B cell (primary cell): ENCODE measurements at regions of chr11 and their contacts with region 1.

Region 1: DNA sequence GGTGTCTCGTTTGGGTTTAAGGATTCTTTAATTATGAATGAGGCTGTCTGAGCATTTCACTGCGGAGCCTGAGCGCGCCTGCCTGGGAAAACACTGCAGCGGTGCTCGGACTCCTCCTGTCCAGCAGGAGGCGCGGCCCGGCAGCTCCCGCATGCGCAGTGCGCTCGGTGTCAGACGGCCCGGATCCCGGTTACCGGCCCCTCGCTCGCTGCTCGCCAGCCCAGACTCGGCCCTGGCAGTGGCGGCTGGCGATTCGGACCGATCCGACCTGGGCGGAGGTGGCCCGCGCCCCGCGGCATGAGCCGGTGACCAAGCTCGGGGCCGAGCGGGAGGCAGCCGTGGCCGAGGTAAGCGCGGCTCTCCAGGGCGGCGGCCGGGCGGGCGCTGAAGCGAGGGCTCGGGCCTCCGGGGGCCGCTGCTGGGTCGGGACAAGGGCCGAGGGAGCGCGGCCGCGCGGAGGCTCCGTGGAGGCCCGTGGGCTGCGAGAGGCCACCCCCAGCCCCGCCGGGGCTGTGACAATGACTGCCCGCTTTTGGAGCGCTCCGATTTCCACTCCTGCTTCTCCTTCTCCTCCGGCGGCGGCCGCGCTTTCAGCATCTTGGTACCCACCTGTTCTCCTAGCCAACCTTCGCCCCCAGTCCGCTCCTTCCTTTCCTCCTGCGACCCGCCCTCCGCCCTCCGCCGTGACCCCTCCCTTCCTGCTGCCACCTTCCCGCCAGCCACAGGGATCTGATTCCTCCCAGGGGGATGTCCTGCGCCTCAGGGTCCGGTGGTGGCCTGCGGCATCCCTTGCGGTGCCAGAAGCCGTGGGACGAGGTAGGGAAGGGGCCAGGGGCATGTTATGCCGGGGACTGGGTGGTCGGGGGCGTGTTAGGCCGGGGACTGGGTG is at the start of gene EXT2:
- DNase-seq: peak; percentile 91
- ATAC-seq: peak; percentile 94
- H3K4me3 ChIP-seq: peak within 1 kb of the TSS in 4 of 5 experiments; percentile 54 to 84 (median 72)
- H3K4me3 Mint-ChIP-seq: peak within 1 kb of the TSS; percentile 90
- H3K27ac ChIP-seq: peak within 1 kb of the TSS in 1 of 2 donors; percentile 76
- H3K27ac Mint-ChIP-seq: peak within 1 kb of the TSS; percentile 69
- H3K4me1 ChIP-seq: peaks cover 15 to 18% of the 10 kb centered on the region in 2 donors
- H3K4me1 Mint-ChIP-seq: peaks cover 30% of the 10 kb centered on the region
- H3K27me3 ChIP-seq: no peaks in the 10 kb centered on the region
- H3K27me3 Mint-ChIP-seq: no peaks in the 10 kb centered on the region
- CTCF ChIP-seq: peak; percentile 95
- total RNA-seq, gene EXT2: 27.7 and 27.8 TPM in 2 replicates

Region 2: DNA sequence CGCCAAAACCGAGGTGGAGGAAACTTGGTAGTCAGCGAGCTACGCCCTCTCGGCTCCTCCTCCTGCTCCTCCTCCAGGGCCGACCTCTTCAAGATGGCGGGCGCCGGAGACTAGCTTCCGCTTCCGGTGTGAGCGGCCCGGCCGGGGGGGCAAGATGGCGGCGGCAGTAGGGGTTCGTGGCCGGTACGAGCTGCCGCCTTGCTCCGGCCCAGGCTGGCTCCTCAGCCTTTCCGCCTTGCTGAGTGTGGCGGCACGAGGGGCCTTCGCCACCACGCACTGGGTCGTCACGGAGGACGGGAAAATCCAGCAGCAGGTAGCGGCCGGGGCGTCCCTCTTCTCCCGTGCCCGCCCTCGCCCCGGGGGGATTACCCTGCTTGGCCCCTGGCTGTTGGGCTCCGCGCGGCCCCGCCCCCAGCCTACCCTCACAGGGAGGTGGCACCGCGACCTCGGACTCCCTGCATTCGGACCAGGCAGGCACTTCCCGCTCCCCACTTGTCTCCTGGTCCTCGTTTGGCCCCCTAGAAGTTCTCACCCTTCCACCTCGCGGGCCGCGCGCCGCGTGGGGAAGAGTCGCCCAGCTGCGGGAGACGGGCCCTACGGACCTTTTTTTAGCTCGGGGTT is 736.8 kb before region 1 on chr11 and contains the start of gene TTC17:
- CTCF ChIA-PET with region 1: no interaction called
- POLR2A ChIA-PET with region 1: no interaction called
- intact Hi-C with region 1: loop called (anchors 2 kb)
- DNase-seq: peak; percentile 93
- ATAC-seq: peak; percentile 93
- H3K4me3 ChIP-seq: peak within 1 kb of the TSS; percentile 75 to 96 (median 91)
- H3K4me3 Mint-ChIP-seq: peak within 1 kb of the TSS; percentile 91
- H3K27ac ChIP-seq: peak within 1 kb of the TSS; percentile 89 to 96
- H3K27ac Mint-ChIP-seq: peak within 1 kb of the TSS; percentile 97
- H3K4me1 ChIP-seq: peaks cover 22 to 25% of the 10 kb centered on the region in 2 donors
- H3K4me1 Mint-ChIP-seq: peaks cover 51% of the 10 kb centered on the region
- H3K27me3 ChIP-seq: no peaks in the 10 kb centered on the region
- H3K27me3 Mint-ChIP-seq: no peaks in the 10 kb centered on the region
- CTCF ChIP-seq: no peak
- total RNA-seq, gene TTC17: 176 and 182 TPM in 2 replicates

Region 3: GRCh38 chr11:44071157-44071556 is 24.6 kb before region 1 on chr11:
- CTCF ChIA-PET with region 1: interaction called, 34 read pairs
- POLR2A ChIA-PET with region 1: interaction called, 3 read pairs
- intact Hi-C with region 1: loop called (anchors 1 kb)
- DNase-seq: no peak
- ATAC-seq: no peak
- H3K4me3 ChIP-seq: no peak overlapping the region
- H3K4me3 Mint-ChIP-seq: no peak overlapping the region
- H3K27ac ChIP-seq: no peak overlapping the region
- H3K27ac Mint-ChIP-seq: no peak overlapping the region
- H3K4me1 ChIP-seq: peaks cover 0 to 9% of the 10 kb centered on the region in 2 donors
- H3K4me1 Mint-ChIP-seq: peaks cover 11% of the 10 kb centered on the region
- H3K27me3 ChIP-seq: no peaks in the 10 kb centered on the region
- H3K27me3 Mint-ChIP-seq: no peaks in the 10 kb centered on the region
- CTCF ChIP-seq: no peak

Region 4: DNA sequence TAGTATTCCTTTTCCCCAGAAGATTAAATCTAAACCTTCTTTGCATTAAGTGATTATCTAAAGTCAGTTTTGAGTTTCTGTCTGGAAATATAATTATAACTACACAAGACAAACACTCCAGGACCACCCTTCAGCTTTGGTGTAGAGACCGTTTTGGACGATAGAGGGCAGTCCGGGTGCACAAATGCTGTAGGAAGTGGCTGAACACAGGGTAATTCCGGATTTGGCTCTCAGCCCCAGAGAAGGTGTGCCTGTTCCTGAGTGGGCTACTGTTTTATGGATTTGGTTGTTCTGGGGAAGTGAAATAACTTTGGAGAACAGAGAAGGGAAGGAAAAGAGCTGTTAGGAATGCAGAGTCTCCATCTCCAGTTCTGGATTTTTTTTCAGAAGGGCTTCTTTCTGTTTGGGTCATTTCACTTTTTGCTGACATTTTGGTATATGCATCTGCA is 14.5 kb after region 1 on chr11:
- CTCF ChIA-PET with region 1: interaction called, 61 read pairs
- POLR2A ChIA-PET with region 1: no interaction called
- intact Hi-C with region 1: loop called (anchors 1 kb)
- DNase-seq: peak; percentile 66
- ATAC-seq: peak; percentile 88
- H3K4me3 ChIP-seq: no peak overlapping the region
- H3K4me3 Mint-ChIP-seq: no peak overlapping the region
- H3K27ac ChIP-seq: no peak overlapping the region
- H3K27ac Mint-ChIP-seq: no peak overlapping the region
- H3K4me1 ChIP-seq: peaks cover 3 to 4% of the 10 kb centered on the region in 2 donors
- H3K4me1 Mint-ChIP-seq: peaks cover 5% of the 10 kb centered on the region
- H3K27me3 ChIP-seq: no peaks in the 10 kb centered on the region
- H3K27me3 Mint-ChIP-seq: no peaks in the 10 kb centered on the region
- CTCF ChIP-seq: peak; percentile 85

Region 5: DNA sequence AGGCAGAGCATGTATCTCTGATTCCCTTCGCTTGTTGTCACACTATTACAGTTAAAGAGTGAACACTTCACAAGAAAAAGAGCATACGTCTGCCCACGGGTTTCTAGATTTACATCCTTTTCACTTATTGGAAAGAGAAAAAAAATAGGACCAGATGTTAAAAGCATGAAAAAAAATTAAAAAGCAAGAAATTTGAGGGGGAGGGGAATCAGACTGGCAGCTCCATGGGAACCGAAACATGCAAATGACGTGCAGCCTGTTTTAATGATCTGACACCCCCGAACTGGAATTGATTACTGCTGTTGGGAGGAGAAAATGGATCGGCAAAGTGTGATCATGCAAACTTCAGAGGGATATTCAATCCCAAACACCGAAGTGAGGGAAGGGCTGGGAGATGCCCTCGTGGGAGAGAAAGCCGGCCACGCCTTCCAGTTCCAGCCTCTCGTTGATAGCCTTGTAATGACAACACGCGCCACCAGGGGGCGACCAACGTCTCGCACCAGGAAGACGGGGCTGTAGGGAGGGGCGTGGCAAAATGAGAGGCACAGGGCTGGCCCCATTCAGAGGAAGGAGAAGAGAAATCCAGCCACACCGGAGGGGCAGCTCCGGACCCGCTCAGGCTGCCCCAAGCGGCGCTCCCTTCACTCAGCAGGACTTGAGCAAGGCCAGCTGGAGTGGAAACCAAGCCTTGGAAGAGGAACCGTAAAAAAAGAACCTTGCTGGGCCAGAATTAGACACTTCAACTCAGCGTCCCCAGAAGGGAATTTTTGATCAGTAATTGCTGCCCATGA is 1244.2 kb after region 1 on chr11:
- CTCF ChIA-PET with region 1: no interaction called
- POLR2A ChIA-PET with region 1: no interaction called
- intact Hi-C with region 1: loop called (anchors 10 kb)
- DNase-seq: peak; percentile 93
- ATAC-seq: peak; percentile 100
- H3K4me3 ChIP-seq: peak overlapping the region; percentile 23 to 65 (median 50)
- H3K4me3 Mint-ChIP-seq: peak overlapping the region; percentile 92
- H3K27ac ChIP-seq: no peak overlapping the region
- H3K27ac Mint-ChIP-seq: peak overlapping the region; percentile 76
- H3K4me1 ChIP-seq: peaks cover 8 to 13% of the 10 kb centered on the region in 2 donors
- H3K4me1 Mint-ChIP-seq: peaks cover 18% of the 10 kb centered on the region
- H3K27me3 ChIP-seq: peaks cover 0 to 4% (median 2%) of the 10 kb centered on the region in 4 experiments
- H3K27me3 Mint-ChIP-seq: peaks cover 26% of the 10 kb centered on the region
- CTCF ChIP-seq: peak; percentile 90